WTC11 (cell line): ENCODE measurements at regions of chr16 and their contacts with region 1.

Region 1: DNA sequence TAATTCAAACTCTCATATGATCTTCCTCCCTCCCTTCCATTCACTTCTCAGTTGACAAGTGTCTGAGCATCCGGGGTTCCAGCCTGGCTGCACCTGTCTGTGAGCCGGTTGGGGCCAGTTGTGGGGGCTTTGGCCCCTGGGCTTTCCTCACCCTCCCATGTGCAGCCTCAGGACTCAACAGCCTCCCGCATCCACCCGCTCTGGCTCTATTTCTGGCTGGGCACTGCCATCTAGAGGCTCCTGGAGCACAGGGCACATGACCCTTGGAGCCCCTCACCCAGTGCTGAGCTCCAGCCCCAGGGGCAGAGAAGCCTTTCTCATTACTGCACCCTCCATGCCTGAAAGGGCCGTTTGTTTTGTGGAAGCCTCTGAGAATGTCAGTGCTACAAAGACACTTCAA is 43.3 kb downstream of the HAPSTR1 start:
- DNase-seq: peak; percentile 80
- ATAC-seq: peak; percentile 84
- H3K4me3 Mint-ChIP-seq: no peak overlapping the region
- H3K27ac Mint-ChIP-seq: no peak overlapping the region
- H3K4me1 Mint-ChIP-seq: peaks cover 17% of the 10 kb centered on the region
- H3K27me3 Mint-ChIP-seq: no peaks in the 10 kb centered on the region
- CTCF ChIP-seq: peak; percentile 24; the same call in 1 of the 2 replicates

Region 2: DNA sequence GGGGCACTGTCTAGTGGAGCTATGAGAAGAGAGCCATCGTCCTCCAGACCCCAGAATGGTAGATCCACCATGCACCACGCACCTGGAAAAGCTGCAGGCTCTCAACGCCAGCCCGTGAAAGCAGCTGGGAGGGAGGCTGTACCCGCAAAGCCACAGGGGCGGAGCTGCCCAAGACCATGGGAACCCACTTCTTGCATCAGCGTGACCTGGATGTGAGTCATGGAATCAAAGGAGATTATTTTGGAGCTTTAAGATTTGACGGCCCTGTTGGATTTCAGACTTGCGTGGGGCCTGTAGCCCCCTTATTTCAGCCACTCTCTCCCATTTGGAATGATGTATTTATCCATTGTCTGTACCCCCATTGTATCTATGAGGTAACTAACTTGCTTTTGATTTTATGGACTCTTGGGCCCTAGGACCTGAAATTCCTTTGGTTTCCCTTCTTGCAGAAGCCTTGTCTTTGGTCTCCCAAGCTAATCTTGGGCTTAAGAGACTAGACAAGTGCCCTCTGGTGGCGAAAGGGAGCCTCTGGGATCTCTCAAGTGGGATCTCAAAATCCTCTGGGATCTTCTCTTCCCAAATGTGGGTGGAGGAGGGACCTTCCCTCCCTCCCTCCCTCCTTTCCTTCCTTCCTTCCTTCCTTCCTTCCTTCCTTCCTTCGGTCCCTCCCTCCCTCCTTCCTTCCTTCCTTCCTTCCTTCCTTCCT is 101.5 kb before region 1 on chr16:
- CTCF ChIA-PET with region 1: interaction called, 20 read pairs
- POLR2A ChIA-PET with region 1: no interaction called
- DNase-seq: peak; percentile 74
- ATAC-seq: peak; percentile 85
- H3K4me3 Mint-ChIP-seq: no peak overlapping the region
- H3K27ac Mint-ChIP-seq: no peak overlapping the region
- H3K4me1 Mint-ChIP-seq: no peaks in the 10 kb centered on the region
- H3K27me3 Mint-ChIP-seq: no peaks in the 10 kb centered on the region
- CTCF ChIP-seq: peak; percentile 31; the same call in 1 of the 2 replicates

Region 3: GRCh38 chr16:9090960-9091866 is 43.5 kb before region 1 on chr16 and contains the start of gene HAPSTR1:
- CTCF ChIA-PET with region 1: interaction called, 11 read pairs
- POLR2A ChIA-PET with region 1: no interaction called
- DNase-seq: peak; percentile 99
- ATAC-seq: peak; percentile 94
- H3K4me3 Mint-ChIP-seq: peak within 1 kb of the TSS; percentile 100
- H3K27ac Mint-ChIP-seq: peak within 1 kb of the TSS; percentile 92
- H3K4me1 Mint-ChIP-seq: peaks cover 35% of the 10 kb centered on the region
- H3K27me3 Mint-ChIP-seq: no peaks in the 10 kb centered on the region
- CTCF ChIP-seq: no peak
- total RNA-seq, gene HAPSTR1: 54.3 to 59.1 TPM (median 56.4 TPM) in 3 replicates

Region 4: DNA sequence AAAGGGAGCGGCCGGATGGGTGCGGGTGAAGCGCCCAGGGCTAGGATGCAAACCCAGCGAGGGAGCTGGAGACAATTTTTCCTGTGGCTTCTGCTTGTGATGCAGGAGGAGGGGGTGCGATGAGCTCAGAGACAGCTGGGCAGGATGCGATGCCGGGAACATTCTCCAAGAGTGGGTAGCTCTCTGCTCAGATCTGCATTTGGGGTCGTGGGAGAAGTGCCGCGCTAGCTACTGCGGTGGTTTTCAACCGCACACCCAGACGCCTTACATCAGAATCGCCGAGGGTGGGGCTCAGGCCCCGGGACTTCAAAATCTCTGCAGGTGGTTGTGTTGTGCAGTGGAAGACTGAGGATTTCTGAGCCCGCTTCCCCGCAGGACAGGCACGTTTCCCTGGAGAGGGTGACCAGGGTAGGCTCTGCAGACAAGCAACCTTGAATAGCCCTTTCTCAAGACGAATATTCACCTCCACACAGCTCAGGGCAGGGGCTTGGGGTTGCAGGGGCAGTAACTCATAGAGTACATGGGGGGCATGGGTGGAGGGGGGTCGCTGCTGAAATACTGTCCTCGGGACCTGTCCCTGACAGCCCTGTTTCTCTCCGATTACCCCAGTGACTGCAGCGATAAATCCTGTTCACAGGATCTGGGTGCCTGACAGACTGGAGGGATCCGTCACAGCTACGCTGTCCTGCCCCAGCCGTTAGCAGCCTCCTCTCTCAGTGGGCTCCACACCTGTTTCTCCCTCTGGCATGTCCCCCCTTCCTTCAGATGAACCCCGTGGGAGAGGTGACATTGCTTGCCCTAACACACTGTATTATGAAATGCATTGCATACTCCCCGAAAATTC is 20.1 kb after region 1 on chr16:
- CTCF ChIA-PET with region 1: interaction called, 40 read pairs
- POLR2A ChIA-PET with region 1: no interaction called
- DNase-seq: no peak
- ATAC-seq: peak; percentile 12; the same call in 1 of the 2 replicates
- H3K4me3 Mint-ChIP-seq: no peak overlapping the region; the same call in 1 of the 2 replicates
- H3K27ac Mint-ChIP-seq: peak overlapping the region; percentile 52; the same call in 1 of the 2 replicates
- H3K4me1 Mint-ChIP-seq: peaks cover 60% of the 10 kb centered on the region
- H3K27me3 Mint-ChIP-seq: no peaks in the 10 kb centered on the region; the same call in 1 of the 2 replicates
- CTCF ChIP-seq: no peak

Region 5: GRCh38 chr16:9170470-9170869 is 35.7 kb after region 1 on chr16:
- CTCF ChIA-PET with region 1: no interaction called
- POLR2A ChIA-PET with region 1: no interaction called
- DNase-seq: no peak
- ATAC-seq: no peak
- H3K4me3 Mint-ChIP-seq: no peak overlapping the region
- H3K27ac Mint-ChIP-seq: no peak overlapping the region
- H3K4me1 Mint-ChIP-seq: peaks cover 3% of the 10 kb centered on the region
- H3K27me3 Mint-ChIP-seq: no peaks in the 10 kb centered on the region; the same call in 1 of the 2 replicates
- CTCF ChIP-seq: no peak

Region 6: DNA sequence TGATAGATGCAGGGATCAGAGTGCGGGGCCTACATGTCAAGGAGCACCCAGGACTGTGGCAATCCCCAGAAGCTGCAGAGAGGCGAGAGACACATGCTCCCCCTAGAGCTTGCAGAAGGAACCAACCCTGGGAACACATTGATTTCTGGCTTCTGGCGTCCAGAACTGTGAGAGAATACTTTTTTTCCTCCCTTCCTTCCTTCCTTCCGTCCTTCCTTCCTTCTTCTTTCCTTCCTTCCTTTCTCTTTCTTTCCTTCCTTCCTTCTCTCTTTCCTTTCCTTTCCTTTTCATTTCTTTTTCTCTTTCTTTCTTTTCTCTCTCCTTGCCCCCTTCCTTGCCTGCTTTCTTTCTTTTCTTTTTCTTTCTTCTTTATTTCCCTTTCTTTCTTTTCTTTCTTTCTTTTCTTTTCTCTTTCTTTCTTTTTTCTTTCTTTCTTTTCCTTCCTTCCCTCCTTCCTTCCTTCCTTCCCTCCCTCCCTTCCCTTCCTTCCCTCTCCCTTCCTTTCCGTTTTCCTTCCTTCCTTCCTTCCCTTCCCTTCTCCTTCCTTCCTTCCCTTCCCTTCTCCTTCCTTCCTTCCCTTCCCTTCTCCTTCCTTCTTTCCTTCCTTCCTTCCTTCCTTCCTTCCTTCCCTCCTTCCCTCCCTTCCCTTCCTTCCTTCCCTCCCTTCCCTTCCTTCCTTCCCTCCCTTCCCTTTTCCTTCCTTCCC is 91.0 kb after region 1 on chr16:
- CTCF ChIA-PET with region 1: interaction called, 33 read pairs
- POLR2A ChIA-PET with region 1: no interaction called
- DNase-seq: peak; percentile 48
- ATAC-seq: peak; percentile 96
- H3K4me3 Mint-ChIP-seq: no peak overlapping the region
- H3K27ac Mint-ChIP-seq: no peak overlapping the region
- H3K4me1 Mint-ChIP-seq: no peaks in the 10 kb centered on the region
- H3K27me3 Mint-ChIP-seq: no peaks in the 10 kb centered on the region; the same call in 1 of the 2 replicates
- CTCF ChIP-seq: peak; percentile 60

Region 7: DNA sequence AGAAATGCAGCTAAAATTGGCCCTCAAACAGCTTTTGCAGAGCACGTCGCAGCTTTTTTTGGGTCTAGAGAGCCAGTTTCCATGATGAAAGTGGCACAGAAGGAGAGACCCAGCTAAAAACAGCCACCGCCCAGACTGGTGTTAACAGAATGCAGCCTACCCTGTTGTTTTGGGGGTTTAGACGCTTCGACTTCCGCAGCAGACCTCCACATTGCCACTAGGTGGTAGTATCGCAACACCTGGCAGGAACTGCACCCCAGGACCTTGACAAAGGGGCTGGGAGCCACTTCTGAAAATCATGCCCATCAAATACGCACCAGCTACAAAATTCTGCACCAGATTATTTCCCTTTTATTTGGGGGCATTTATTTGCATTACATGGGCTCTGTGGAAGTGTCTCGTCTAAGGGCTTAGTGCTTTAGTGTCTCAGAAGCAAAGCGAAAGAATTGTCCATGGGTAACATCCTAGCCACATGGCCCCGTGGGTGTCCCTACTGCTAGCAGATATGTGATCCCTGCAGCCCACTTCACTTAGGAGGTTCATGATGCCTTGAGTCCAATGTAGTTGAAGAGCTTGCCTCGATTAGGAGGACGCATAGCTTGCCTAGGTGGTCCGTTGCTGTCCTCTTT is 123.8 kb after region 1 on chr16:
- CTCF ChIA-PET with region 1: interaction called, 24 read pairs
- POLR2A ChIA-PET with region 1: no interaction called
- DNase-seq: peak; percentile 75
- ATAC-seq: peak; percentile 86
- H3K4me3 Mint-ChIP-seq: no peak overlapping the region
- H3K27ac Mint-ChIP-seq: no peak overlapping the region
- H3K4me1 Mint-ChIP-seq: peaks cover 23% of the 10 kb centered on the region
- H3K27me3 Mint-ChIP-seq: no peaks in the 10 kb centered on the region
- CTCF ChIP-seq: peak; percentile 73